Heart left ventricle (tissue), 16 donors: ENCODE measurements at regions of chr20 and their contacts with region 1.

Region 1: DNA sequence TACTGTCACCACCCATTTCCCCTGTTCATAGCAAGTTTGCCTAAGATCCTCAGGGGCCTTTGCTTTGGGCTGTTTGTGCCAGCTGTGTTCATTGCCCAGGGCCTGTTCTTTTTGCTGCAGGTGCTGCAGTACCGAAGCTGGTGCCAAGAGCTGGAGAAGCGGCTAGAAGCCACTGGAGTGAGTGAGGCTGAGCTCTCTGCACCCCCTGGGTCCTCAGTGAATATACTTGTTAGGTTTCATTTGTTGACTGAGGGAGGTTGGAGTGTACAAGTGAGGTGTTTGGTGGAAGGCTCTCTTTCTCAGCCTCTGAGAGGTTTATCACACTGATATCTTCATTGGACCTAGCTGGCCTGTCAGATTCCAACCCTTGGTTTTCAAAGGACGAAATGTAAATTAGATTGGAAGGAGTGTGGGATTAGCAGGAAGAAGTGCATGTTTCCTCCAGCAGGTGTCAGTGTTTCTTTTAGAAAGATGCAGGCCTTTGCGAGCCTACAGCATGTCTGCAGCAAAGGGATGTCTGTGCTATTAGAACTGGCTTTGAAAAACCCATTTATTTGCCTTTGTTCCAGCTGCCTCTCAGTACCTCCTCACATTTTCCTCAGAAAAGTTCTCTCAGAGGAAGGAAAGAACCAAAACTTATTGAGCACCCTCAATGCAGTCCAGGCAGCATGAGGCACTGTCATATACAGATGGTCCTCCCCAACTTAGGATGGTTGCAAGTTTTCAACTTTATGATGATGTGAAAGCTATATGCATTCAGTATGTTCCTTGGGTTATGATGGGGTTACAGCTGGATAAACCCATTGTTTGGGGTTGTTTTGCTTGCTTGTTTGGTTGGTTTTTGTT is 8.3 kb downstream of the CEP250 start:
- DNase-seq: peak in 4 of 5 donors; percentile 34 to 44 (median 38)
- ATAC-seq: peak; percentile 24 to 79 (median 76)
- H3K4me3 ChIP-seq: no peak overlapping the region
- H3K27ac ChIP-seq: no peak overlapping the region
- H3K4me1 ChIP-seq: peaks cover 0 to 6% (median 0%) of the 10 kb centered on the region in 12 donors
- H3K27me3 ChIP-seq: no peaks in the 10 kb centered on the region
- CTCF ChIP-seq: peak; percentile 67 to 90 (median 78)
- POLR2A ChIP-seq: no peak

Region 2: DNA sequence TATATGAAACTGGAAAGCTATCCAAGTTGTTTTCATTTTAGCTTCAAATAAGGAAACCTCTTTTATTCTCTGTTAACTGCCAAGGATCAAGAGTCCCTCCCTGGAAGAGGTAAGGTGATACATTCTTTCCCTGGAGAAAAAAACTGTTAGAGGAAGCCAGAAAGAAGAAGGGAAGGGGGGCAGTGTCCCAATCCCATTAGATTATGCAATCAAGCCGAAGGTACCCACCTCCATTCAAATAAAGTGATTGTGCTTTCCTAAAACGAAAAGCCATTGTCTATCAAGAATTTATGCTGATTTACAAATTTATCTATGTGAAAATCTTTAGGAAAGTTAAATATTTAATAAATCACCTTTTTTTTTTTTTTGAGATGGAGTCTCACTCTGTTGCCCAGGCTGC is 42.4 kb before region 1 on chr20:
- intact Hi-C with region 1: no loop called
- DNase-seq: no peak
- ATAC-seq: no peak
- H3K4me3 ChIP-seq: no peak overlapping the region
- H3K27ac ChIP-seq: no peak overlapping the region
- H3K4me1 ChIP-seq: no peaks in the 10 kb centered on the region
- H3K27me3 ChIP-seq: peaks cover 0 to 18% (median 0%) of the 10 kb centered on the region in 9 donors
- CTCF ChIP-seq: no peak
- POLR2A ChIP-seq: no peak

Region 3: GRCh38 chr20:35568645-35569262 is 105.1 kb after region 1 on chr20:
- intact Hi-C with region 1: no loop called
- DNase-seq: no peak
- ATAC-seq: no peak
- H3K4me3 ChIP-seq: no peak overlapping the region
- H3K27ac ChIP-seq: no peak overlapping the region
- H3K4me1 ChIP-seq: no peaks in the 10 kb centered on the region
- H3K27me3 ChIP-seq: no peaks in the 10 kb centered on the region
- CTCF ChIP-seq: no peak
- POLR2A ChIP-seq: no peak

Region 4: DNA sequence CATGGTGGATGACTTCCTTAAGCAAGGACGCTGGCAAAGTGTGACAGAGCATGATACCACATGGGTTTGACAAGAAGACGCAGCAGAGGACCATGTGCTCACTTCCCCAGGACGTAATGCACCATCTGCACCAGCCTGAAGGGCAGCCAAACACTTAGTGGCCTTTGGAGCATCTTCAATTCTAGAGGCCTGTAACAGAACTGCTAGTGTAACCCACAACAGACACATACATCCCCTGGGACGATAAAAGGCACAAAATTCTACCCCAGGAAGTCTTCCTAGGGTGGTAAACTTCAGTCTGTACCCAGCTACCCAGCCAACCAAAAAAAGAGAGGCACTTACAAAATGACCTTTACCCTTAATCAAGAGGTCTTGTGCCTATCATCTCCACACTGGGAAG is 210.2 kb after region 1 on chr20:
- intact Hi-C with region 1: loop called in 1 of 10 experiments (anchors 10 kb)
- DNase-seq: no peak
- ATAC-seq: no peak
- H3K4me3 ChIP-seq: no peak overlapping the region
- H3K27ac ChIP-seq: no peak overlapping the region
- H3K4me1 ChIP-seq: no peaks in the 10 kb centered on the region
- H3K27me3 ChIP-seq: no peaks in the 10 kb centered on the region
- CTCF ChIP-seq: no peak
- POLR2A ChIP-seq: no peak